ENCODE measurements at regions of chr16 and their contacts with region 1.

Region 1: GRCh38 chr16:4811236-4811635 is 8.8 kb upstream of the ROGDI start:
- DNase-seq: no peak
- H3K27ac ChIP-seq: peak overlapping the region; percentile 55
- CTCF ChIP-seq: no peak

Region 2: GRCh38 chr16:4618645-4619335 is 192.4 kb before region 1 on chr16:
- CTCF ChIA-PET with region 1: no interaction called
- POLR2A ChIA-PET with region 1: interaction called, 12 read pairs
- DNase-seq: peak; percentile 42
- H3K27ac ChIP-seq: peak overlapping the region; percentile 91
- CTCF ChIP-seq: no peak

Region 3: DNA sequence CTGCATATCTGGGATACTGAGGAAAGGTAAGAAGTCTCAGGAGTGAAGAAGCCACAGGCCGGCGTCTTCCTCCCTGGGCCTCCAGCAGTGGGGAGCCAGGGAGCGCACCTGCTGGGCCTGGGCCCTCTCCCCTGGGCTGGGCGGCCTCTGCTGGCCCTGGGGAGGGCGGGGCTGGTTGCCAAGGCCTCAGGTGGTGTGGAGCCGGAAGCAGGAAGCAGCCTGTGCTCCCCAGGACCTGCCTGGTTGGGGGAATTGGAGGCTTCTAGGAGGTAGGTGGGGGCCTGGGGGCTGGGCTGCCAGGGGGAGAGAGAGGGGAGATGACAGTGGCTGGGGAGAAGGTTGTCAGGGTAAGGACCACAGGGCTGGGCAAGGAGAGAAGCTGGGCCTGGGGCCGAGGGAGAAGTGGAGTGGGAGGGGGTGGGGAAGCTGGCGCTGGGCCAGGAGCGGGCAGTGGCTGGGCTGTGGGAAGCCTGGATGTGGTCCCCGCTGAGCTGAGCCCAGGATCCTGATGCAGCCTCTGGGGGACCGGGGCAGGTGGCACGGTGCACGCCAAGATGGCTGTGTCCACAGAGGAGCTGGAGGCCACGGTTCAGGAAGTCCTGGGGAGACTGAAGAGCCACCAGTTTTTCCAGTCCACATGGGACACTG is 15.9 kb before region 1 on chr16 and contains the start of gene SMIM22:
- CTCF ChIA-PET with region 1: no interaction called
- POLR2A ChIA-PET with region 1: no interaction called
- DNase-seq: no peak
- H3K27ac ChIP-seq: peak within 1 kb of the TSS; percentile 41
- CTCF ChIP-seq: no peak

Region 4: DNA sequence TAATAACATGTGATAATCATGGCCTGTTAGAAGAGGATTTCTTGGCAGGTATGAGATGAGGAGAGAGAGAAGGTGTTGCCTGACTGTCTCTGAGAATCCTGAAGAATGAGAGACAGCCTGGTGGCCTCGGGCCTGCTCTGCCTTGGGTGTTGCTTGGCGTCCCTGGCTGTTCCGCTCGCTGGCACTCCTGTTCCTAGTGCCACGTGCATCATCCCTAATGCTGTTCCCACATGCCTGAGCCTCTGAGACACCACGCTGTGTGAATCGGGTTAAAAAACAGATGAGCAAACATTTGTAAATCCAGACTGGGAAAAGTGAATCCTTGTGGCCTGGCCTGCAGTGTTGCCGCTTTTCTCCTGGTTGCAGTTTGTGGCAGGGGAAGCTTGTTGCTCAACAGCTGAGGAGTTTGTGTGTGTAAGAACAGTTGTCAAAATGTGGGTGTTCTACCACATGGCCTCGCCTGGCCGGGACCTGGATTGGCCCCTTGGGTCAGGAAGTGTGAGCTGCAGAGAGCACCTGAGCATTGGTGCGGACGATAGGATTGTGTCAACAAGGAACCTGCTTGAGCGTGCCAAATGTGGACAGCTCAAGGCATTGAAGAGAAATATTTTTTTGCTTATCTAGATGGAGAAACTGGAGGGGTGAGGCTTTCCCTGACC is 58.0 kb after region 1 on chr16:
- CTCF ChIA-PET with region 1: no interaction called
- POLR2A ChIA-PET with region 1: no interaction called
- DNase-seq: no peak
- H3K27ac ChIP-seq: peak overlapping the region; percentile 21; the same call in 1 of the 2 replicates
- CTCF ChIP-seq: no peak

Measured in RWPE1 (cell line).